ENCODE measurements at regions of chr5 and their contacts with region 1.

Region 1: GRCh38 chr5:177390363-177391300 is 6.4 kb downstream of the SLC34A1 start:
- DNase-seq: peak; percentile 80
- ATAC-seq: peak; percentile 84
- H3K4me3 ChIP-seq: no peak overlapping the region
- H3K27ac ChIP-seq: no peak overlapping the region
- H3K4me1 ChIP-seq: peaks cover 16% of the 10 kb centered on the region
- H3K27me3 ChIP-seq: peaks cover 22% of the 10 kb centered on the region
- CTCF ChIP-seq: peak; percentile 95
- POLR2A ChIP-seq: no peak
- RAD21 ChIP-seq: peak; percentile 84

Region 2: DNA sequence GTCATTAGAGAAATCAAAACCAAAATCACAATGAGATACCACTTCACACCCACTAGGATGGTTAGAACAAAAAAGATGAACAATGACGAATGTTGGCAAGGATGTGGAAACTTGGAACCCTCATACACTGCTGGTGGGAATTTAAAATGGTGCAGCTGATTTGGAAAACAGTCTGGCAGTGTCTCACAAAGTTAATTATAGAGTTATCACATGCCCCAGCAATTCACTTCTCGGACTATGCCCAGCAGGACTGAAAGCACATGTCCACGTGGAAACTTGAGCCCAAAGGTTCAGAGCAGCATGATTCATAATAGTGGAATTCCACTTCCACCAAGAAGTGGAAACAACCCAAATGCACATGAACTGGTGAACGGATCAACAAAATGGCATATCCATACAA is 1817.7 kb before region 1 on chr5:
- CTCF ChIA-PET with region 1: no interaction called
- POLR2A ChIA-PET with region 1: no interaction called
- dilution Hi-C with region 1: no loop called
- in situ Hi-C with region 1: no loop called
- intact Hi-C with region 1: no loop called
- DNase-seq: peak; percentile 15
- ATAC-seq: no peak
- H3K4me3 ChIP-seq: no peak overlapping the region
- H3K27ac ChIP-seq: no peak overlapping the region
- H3K4me1 ChIP-seq: no peaks in the 10 kb centered on the region
- H3K27me3 ChIP-seq: no peaks in the 10 kb centered on the region
- CTCF ChIP-seq: no peak
- POLR2A ChIP-seq: no peak
- RAD21 ChIP-seq: no peak

Region 3: GRCh38 chr5:177288191-177288590 is 102.4 kb before region 1 on chr5:
- CTCF ChIA-PET with region 1: no interaction called
- POLR2A ChIA-PET with region 1: no interaction called
- dilution Hi-C with region 1: no loop called
- in situ Hi-C with region 1: no loop called
- intact Hi-C with region 1: no loop called
- DNase-seq: no peak
- ATAC-seq: no peak
- H3K4me3 ChIP-seq: no peak overlapping the region
- H3K27ac ChIP-seq: no peak overlapping the region
- H3K4me1 ChIP-seq: no peaks in the 10 kb centered on the region
- H3K27me3 ChIP-seq: no peaks in the 10 kb centered on the region
- CTCF ChIP-seq: no peak
- POLR2A ChIP-seq: no peak
- RAD21 ChIP-seq: no peak

Region 4: GRCh38 chr5:177378884-177379883 is 11.4 kb before region 1 on chr5:
- CTCF ChIA-PET with region 1: interaction called, 14 read pairs
- POLR2A ChIA-PET with region 1: no interaction called
- dilution Hi-C with region 1: no loop called
- in situ Hi-C with region 1: no loop called
- intact Hi-C with region 1: no loop called
- DNase-seq: peak; percentile 97
- ATAC-seq: peak; percentile 97
- H3K4me3 ChIP-seq: no peak overlapping the region
- H3K27ac ChIP-seq: peak overlapping the region; percentile 5; the same call in 1 of the 2 replicates
- H3K4me1 ChIP-seq: peaks cover 9% of the 10 kb centered on the region; the same call in 1 of the 2 replicates
- H3K27me3 ChIP-seq: peaks cover 24% of the 10 kb centered on the region
- CTCF ChIP-seq: no peak
- POLR2A ChIP-seq: no peak
- RAD21 ChIP-seq: no peak; the same call in 1 of the 2 replicates

Region 5: GRCh38 chr5:177446200-177447065 is 55.8 kb after region 1 on chr5 and contains the start of gene PRR7:
- CTCF ChIA-PET with region 1: interaction called, 5 read pairs
- POLR2A ChIA-PET with region 1: no interaction called
- dilution Hi-C with region 1: no loop called
- in situ Hi-C with region 1: no loop called
- intact Hi-C with region 1: loop called (anchors 2 kb)
- DNase-seq: peak; percentile 64
- ATAC-seq: peak; percentile 77
- H3K4me3 ChIP-seq: peak within 1 kb of the TSS; percentile 92
- H3K27ac ChIP-seq: peak within 1 kb of the TSS; percentile 73; the same call in 1 of the 2 replicates
- H3K4me1 ChIP-seq: peaks cover 10% of the 10 kb centered on the region
- H3K27me3 ChIP-seq: no peaks in the 10 kb centered on the region
- CTCF ChIP-seq: 0 out of 2 replicates have a peak, but pooled peaks have one; percentile 9
- POLR2A ChIP-seq: no peak
- RAD21 ChIP-seq: no peak
- total RNA-seq, gene PRR7: 1.1 TPM in 2 replicates

Region 6: DNA sequence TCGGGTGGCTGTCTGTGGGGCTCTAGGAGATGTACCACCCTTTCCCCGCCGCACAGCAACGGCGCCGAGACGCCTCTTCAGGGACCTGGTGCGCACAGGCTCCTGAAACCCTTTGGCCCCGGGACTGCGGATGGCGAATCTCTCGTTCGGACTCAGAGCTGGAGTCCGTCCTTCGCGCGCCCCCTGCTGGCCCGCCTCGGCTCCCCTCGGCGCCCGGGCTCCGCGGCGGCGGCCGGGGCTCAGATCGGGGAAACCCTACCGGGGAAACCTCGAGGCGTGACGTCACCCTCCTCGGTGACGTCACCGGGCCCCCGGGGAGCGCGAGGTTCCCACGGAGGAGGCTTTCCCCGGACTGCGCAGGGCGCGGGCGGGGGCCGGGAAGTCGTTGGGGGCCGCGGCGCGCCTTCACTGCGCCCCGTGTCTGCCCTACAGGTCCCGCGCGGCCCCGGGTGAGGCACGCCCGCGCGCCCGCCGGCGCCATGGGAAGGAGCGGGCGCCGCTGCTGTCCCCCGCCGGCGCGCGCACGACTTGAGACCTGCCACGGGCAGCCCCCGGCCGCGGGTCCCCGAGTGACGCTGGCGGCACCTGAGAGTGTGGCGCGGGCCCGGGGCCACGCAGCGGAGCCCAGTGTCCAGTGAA is 63.9 kb after region 1 on chr5:
- CTCF ChIA-PET with region 1: interaction called, 11 read pairs
- POLR2A ChIA-PET with region 1: interaction called, 3 read pairs
- dilution Hi-C with region 1: no loop called
- in situ Hi-C with region 1: no loop called
- intact Hi-C with region 1: loop called (anchors 1 kb)
- DNase-seq: peak; percentile 80
- ATAC-seq: peak; percentile 58
- H3K4me3 ChIP-seq: peak overlapping the region; percentile 38
- H3K27ac ChIP-seq: no peak overlapping the region; the same call in 1 of the 2 replicates
- H3K4me1 ChIP-seq: peaks cover 8% of the 10 kb centered on the region
- H3K27me3 ChIP-seq: no peaks in the 10 kb centered on the region
- CTCF ChIP-seq: peak; percentile 99
- POLR2A ChIP-seq: 0 out of 2 replicates have a peak, but pooled peaks have one; percentile 24
- RAD21 ChIP-seq: peak; percentile 88

Region 7: GRCh38 chr5:177473461-177474001 is 82.9 kb after region 1 on chr5 and contains the start of gene DBN1:
- CTCF ChIA-PET with region 1: no interaction called
- POLR2A ChIA-PET with region 1: no interaction called
- dilution Hi-C with region 1: no loop called
- in situ Hi-C with region 1: no loop called
- intact Hi-C with region 1: no loop called
- DNase-seq: no peak
- ATAC-seq: peak; percentile 63
- H3K4me3 ChIP-seq: peak within 1 kb of the TSS; percentile 97
- H3K27ac ChIP-seq: peak within 1 kb of the TSS; percentile 93
- H3K4me1 ChIP-seq: peaks cover 45% of the 10 kb centered on the region
- H3K27me3 ChIP-seq: no peaks in the 10 kb centered on the region
- CTCF ChIP-seq: no peak
- POLR2A ChIP-seq: 0 out of 2 replicates have a peak, but pooled peaks have one; percentile 10
- RAD21 ChIP-seq: no peak
- total RNA-seq, gene DBN1: 122 and 212 TPM in 2 replicates

Measured in IMR-90 (cell line).